Right cardiac atrium (tissue), 5 donors: ENCODE measurements at regions of chr2 and their contacts with region 1.

Region 1: GRCh38 chr2:197399887-197400540 is 34.8 kb downstream of the SF3B1 start:
- DNase-seq: no peak
- ATAC-seq: no peak
- H3K4me3 ChIP-seq: no peak overlapping the region
- H3K27ac ChIP-seq: no peak overlapping the region
- H3K4me1 ChIP-seq: no peaks in the 10 kb centered on the region
- H3K27me3 ChIP-seq: no peaks in the 10 kb centered on the region

Region 2: GRCh38 chr2:197198890-197199289 is 201.1 kb before region 1 on chr2:
- intact Hi-C with region 1: no loop called
- DNase-seq: peak; percentile 28 to 76 (median 68)
- ATAC-seq: peak; percentile 77 to 81
- H3K4me3 ChIP-seq: no peak overlapping the region
- H3K27ac ChIP-seq: no peak overlapping the region
- H3K4me1 ChIP-seq: peaks cover 5% of the 10 kb centered on the region
- H3K27me3 ChIP-seq: no peaks in the 10 kb centered on the region

Region 3: DNA sequence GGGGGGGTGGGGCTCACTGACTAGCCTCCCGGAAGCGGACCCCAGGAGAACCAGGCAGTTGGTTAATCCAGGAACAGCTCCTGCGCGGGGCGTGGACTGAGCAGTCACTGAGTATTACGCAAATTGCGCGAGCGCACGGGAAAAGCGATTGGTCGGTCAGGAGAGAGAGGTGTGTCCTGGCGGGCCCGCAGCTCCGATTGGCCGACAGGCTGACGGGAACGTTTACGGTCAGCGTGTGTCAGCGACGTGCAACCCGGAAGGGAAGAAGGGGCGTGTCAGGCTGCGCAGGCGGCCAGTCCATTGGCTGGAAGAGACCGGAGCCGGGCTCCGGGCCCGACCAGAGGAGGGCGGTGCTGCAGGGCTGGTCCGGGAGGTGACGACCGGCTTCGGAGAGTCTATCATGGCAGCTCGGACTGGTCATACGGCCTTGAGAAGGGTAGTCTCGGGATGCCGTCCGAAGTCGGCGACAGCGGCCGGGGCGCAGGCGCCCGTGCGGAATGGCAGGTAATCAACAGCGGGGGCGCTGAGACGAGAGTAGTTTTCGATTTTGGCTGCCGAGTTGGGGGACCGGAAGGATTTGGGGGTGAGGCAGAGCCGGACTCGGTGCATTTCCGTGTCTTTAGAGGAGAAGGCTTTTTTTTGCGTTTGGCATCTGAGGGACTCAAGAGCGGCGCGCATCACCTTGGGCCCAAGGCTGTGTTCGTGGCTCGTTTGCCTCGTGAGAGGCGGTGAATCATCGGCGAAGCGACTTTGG is 53.3 kb after region 1 on chr2 and contains the start of gene COQ10B:
- intact Hi-C with region 1: no loop called
- DNase-seq: peak; percentile 100
- ATAC-seq: peak; percentile 99
- H3K4me3 ChIP-seq: peak within 1 kb of the TSS; percentile 90
- H3K27ac ChIP-seq: peak within 1 kb of the TSS; percentile 99
- H3K4me1 ChIP-seq: no peaks in the 10 kb centered on the region
- H3K27me3 ChIP-seq: no peaks in the 10 kb centered on the region
- total RNA-seq, gene COQ10B: 24.8 to 37.0 (median 29.6) TPM

Region 4: DNA sequence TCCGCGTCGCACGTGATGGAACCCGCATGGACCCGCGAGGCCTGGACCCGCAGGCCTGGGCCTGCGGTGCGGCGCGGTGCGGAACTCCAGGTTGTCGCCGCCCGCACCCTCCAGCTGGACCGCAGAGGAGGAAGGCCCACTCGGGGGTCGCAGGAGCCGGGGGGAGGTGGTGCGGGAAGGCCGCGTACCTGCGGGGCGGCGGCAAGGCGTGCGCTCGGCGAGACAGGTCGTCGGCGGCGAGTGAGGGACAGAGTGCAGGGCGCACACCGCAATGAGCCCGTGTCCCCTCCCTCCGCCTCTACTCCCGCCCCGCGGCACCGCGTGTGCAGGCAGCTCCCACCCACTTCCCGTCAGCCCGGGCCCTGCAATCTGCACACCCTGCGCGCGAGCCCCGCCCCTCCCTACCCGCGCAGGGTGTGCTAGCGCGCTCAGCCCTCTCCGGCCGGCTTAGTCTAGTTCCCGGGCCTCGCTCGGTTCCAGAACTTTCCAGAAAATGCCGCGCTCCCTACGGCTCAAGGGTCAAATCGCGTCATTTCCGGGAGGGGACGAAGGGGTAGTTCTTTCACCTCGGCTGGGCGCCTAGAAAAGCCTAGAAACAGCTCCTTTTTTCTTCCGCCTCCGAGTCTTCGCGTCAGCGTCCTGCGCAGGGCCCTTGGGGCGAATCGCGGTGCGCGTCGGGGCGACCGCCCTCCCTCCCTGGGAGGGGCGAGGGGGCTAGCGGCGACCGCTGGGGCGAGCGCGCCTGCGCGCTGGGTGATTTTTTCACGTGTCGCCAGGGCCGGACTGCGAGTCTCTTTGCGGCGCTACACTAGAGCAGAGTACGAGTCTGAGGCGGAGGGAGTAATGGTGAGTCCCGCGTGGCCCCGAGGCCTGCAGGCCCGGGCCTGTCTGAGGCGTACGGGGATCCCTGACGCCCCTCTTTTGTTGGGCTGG is 99.8 kb after region 1 on chr2 and contains the starts of genes HSPD1 and HSPE1:
- intact Hi-C with region 1: loop called in 1 of 4 experiments (anchors 10 kb)
- DNase-seq: peak; percentile 98 to 99 (median 99)
- ATAC-seq: peak; percentile 98
- H3K4me3 ChIP-seq: peak within 1 kb of the TSS; percentile 81
- H3K27ac ChIP-seq: peak within 1 kb of the TSS; percentile 91
- H3K4me1 ChIP-seq: peaks cover 4% of the 10 kb centered on the region
- H3K27me3 ChIP-seq: no peaks in the 10 kb centered on the region
- total RNA-seq, gene HSPD1: 111 to 182 (median 159) TPM
- total RNA-seq, gene HSPE1: 96.3 to 156 (median 128) TPM